Activated CD4-positive, alpha-beta T cell treated with anti-CD3 and anti-CD28 coated beads, Interleukin-2, amount 10 ng/mL, durations not matched to agents 24 days and 14 days (primary cell): ENCODE measurements at regions of chr15 and their contacts with region 1.

Region 1: GRCh38 chr15:89206908-89207331 is 14.5 kb downstream of the RLBP1 start:
- DNase-seq: peak; percentile 91
- H3K4me3 Mint-ChIP-seq: peak overlapping the region; percentile 41
- H3K27ac Mint-ChIP-seq: peak overlapping the region; percentile 52
- H3K4me1 Mint-ChIP-seq: peaks cover 30% of the 10 kb centered on the region
- H3K27me3 Mint-ChIP-seq: peaks cover 2% of the 10 kb centered on the region

Region 2: DNA sequence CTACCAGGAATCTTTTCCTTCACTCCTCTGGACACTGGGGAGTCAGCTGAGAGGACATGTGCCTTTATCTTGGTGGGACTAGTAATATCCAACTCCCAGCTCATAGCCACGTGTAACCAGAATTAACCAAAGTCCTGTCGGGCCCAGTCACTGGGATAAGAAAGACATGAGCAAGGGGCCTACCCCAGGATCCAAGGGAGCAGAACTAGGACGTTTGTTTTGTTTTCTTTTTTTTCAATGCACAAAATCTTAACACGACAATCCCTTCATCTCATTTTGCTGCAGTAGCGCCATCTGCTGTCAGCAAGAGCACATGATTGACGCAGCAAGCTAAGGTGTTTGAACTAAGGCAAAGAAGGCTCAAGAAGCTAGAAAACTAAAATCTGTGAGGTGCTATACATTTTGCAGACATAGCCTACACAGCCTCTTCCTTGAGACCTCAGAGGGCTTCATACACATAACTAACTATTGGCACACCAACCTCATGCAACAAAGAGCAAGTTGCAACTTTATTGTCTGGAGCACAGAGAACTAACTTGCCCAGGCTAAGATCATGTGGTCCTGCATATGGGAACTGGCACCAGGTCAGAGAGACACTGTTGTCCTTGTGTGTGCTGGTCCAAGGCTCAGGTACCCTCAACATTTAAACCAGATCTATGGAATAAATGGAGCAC is 29.1 kb before region 1 on chr15:
- intact Hi-C with region 1: loop called (anchors 1 kb)
- DNase-seq: peak; percentile 89
- H3K4me3 Mint-ChIP-seq: no peak overlapping the region
- H3K27ac Mint-ChIP-seq: peak overlapping the region; percentile 93
- H3K4me1 Mint-ChIP-seq: peaks cover 33% of the 10 kb centered on the region
- H3K27me3 Mint-ChIP-seq: no peaks in the 10 kb centered on the region

Region 3: DNA sequence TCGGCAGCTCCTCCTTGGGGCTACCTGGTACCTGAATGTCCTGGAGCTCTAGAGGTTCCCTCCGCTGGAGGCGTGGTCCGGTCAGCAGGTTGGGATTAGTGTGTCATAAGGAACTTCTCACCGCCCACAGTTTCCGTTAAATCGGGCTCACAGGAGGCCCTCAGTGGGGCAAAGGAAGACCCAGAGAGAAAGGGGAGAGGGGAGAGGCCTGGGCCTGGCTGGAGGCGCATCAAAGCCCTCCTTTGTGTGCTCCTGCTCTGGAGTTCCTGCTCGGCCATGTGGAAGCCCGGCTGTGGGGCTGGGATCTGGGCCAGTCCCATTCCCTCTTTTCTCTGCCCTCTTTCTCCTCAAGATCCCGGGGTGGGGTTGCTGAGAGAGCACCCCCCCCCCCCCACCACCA is 14.6 kb after region 1 on chr15 and contains the start of gene RLBP1:
- intact Hi-C with region 1: no loop called
- DNase-seq: no peak
- H3K4me3 Mint-ChIP-seq: no peak within 1 kb of the TSS
- H3K27ac Mint-ChIP-seq: no peak within 1 kb of the TSS
- H3K4me1 Mint-ChIP-seq: peaks cover 2% of the 10 kb centered on the region
- H3K27me3 Mint-ChIP-seq: peaks cover 2% of the 10 kb centered on the region
- total RNA-seq, gene RLBP1: not detected in 2 replicates

Region 4: DNA sequence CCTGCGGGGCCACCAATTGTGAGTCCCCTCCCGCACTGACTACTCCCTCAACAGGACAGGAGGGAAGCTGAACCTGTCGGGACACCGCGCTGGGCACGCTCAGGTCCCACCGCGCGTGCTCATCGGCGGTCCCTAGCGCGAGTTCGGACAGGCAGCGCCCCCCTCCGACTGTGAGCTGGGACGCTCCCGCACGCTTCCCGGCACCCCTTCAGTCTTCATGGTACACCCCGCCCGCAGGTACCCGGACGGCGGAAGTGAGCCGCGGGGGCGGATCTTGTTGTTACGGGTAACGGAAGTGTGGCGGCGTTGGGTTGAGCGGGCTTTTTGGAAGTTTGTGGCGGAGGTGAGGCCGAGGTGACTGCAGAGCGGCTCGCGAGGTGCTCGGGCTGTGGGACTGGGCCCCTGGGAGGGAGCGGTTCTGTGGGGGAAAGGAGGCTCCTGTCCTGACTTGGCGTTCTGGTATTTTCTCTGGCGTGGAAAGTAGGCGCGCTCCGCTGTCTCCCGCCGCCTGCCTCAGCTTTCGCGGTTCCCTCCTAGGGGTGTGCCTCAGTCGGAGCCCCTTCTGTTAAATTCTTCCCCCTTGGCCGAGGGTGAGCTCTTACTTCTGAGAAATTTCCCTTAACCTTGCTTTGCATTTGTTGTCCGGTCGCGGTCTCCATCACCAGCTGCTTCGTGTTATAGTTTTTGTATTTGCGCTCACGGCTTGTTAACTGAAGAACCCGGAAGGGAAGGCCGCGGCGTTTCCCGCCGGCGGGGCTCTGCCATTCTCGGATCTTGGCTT is 37.0 kb after region 1 on chr15 and contains the start of gene FANCI:
- intact Hi-C with region 1: loop called (anchors 1 kb)
- DNase-seq: peak; percentile 99
- H3K4me3 Mint-ChIP-seq: peak within 1 kb of the TSS; percentile 97
- H3K27ac Mint-ChIP-seq: peak within 1 kb of the TSS; percentile 96
- H3K4me1 Mint-ChIP-seq: peaks cover 38% of the 10 kb centered on the region
- H3K27me3 Mint-ChIP-seq: peaks cover 11% of the 10 kb centered on the region
- total RNA-seq, gene FANCI: 189 and 210 TPM in 2 replicates

Region 5: GRCh38 chr15:89309993-89310392 is 103.1 kb after region 1 on chr15:
- intact Hi-C with region 1: loop called (anchors 5 kb)
- DNase-seq: no peak
- H3K4me3 Mint-ChIP-seq: no peak overlapping the region
- H3K27ac Mint-ChIP-seq: no peak overlapping the region
- H3K4me1 Mint-ChIP-seq: peaks cover 8% of the 10 kb centered on the region
- H3K27me3 Mint-ChIP-seq: no peaks in the 10 kb centered on the region

Region 6: DNA sequence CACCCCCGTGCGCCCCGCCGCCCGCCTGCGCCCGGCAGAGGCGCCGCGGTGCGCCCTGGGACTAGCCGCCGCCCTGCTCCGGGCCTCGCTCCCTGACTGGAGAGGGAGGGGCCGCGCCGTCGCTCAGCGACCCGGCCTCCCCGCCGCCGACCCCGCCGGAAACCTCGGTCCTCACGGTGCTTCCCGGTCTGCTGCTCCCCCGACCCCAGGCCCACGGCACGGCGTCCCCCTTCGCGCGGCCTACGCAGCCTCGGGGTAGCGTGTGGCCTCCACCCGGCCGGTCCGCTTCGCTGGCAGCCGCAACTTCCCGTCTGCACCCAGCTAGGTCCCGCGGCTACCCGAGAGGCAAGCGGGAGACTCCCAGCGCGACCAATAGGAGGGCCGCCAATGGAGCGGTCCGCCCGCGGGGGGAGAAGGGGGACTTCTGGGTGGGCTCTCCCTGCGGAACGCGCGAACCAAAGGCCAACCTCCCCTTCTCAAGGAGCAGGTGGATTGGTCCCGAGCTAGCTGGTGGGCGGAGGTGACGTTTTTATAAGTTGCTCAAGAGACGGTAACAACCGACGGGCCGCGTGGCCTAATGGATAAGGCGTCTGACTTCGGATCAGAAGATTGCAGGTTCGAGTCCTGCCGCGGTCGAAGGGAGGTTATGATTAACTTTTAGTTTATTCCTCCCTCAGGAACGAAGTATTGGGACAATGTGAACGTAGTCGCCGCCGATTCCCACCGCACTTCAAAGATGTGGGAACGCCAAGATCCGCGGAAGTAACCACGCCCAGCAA is 127.8 kb after region 1 on chr15 and contains the start of gene POLG:
- intact Hi-C with region 1: loop called (anchors 5 kb)
- DNase-seq: peak; percentile 100
- H3K4me3 Mint-ChIP-seq: peak within 1 kb of the TSS; percentile 87
- H3K27ac Mint-ChIP-seq: peak within 1 kb of the TSS; percentile 95
- H3K4me1 Mint-ChIP-seq: peaks cover 50% of the 10 kb centered on the region
- H3K27me3 Mint-ChIP-seq: peaks cover 9% of the 10 kb centered on the region
- total RNA-seq, gene POLG: 124 and 134 TPM in 2 replicates

Region 7: GRCh38 chr15:89430530-89431341 is 223.8 kb after region 1 on chr15:
- intact Hi-C with region 1: loop called (anchors 1 kb)
- DNase-seq: peak; percentile 97
- H3K4me3 Mint-ChIP-seq: peak overlapping the region; percentile 84
- H3K27ac Mint-ChIP-seq: no peak overlapping the region
- H3K4me1 Mint-ChIP-seq: peaks cover 4% of the 10 kb centered on the region
- H3K27me3 Mint-ChIP-seq: peaks cover 31% of the 10 kb centered on the region